Ovary (tissue), 10 donors: ENCODE measurements at regions of chr1 and their contacts with region 1.

Region 1: GRCh38 chr1:22105611-22106207 is 37.2 kb downstream of the WNT4 start:
- DNase-seq: peak in 1 of 5 donors; percentile 56
- H3K4me3 ChIP-seq: no peak overlapping the region
- H3K27ac ChIP-seq: no peak overlapping the region
- H3K4me1 ChIP-seq: peaks cover 15% of the 10 kb centered on the region
- H3K27me3 ChIP-seq: no peaks in the 10 kb centered on the region
- CTCF ChIP-seq: peak; percentile 55 to 92 (median 84)
- EP300 ChIP-seq: no peak
- POLR2A ChIP-seq: no peak

Region 2: GRCh38 chr1:21845646-21846641 is 259.8 kb before region 1 on chr1:
- intact Hi-C with region 1: no loop called
- DNase-seq: no peak
- H3K4me3 ChIP-seq: no peak overlapping the region
- H3K27ac ChIP-seq: no peak overlapping the region
- H3K4me1 ChIP-seq: no peaks in the 10 kb centered on the region
- H3K27me3 ChIP-seq: no peaks in the 10 kb centered on the region
- CTCF ChIP-seq: no peak
- EP300 ChIP-seq: no peak
- POLR2A ChIP-seq: no peak

Region 3: GRCh38 chr1:22089787-22090186 is 15.9 kb before region 1 on chr1:
- intact Hi-C with region 1: no loop called
- DNase-seq: no peak
- H3K4me3 ChIP-seq: no peak overlapping the region
- H3K27ac ChIP-seq: no peak overlapping the region
- H3K4me1 ChIP-seq: peaks cover 8% of the 10 kb centered on the region
- H3K27me3 ChIP-seq: no peaks in the 10 kb centered on the region
- CTCF ChIP-seq: no peak
- EP300 ChIP-seq: no peak
- POLR2A ChIP-seq: no peak

Region 4: DNA sequence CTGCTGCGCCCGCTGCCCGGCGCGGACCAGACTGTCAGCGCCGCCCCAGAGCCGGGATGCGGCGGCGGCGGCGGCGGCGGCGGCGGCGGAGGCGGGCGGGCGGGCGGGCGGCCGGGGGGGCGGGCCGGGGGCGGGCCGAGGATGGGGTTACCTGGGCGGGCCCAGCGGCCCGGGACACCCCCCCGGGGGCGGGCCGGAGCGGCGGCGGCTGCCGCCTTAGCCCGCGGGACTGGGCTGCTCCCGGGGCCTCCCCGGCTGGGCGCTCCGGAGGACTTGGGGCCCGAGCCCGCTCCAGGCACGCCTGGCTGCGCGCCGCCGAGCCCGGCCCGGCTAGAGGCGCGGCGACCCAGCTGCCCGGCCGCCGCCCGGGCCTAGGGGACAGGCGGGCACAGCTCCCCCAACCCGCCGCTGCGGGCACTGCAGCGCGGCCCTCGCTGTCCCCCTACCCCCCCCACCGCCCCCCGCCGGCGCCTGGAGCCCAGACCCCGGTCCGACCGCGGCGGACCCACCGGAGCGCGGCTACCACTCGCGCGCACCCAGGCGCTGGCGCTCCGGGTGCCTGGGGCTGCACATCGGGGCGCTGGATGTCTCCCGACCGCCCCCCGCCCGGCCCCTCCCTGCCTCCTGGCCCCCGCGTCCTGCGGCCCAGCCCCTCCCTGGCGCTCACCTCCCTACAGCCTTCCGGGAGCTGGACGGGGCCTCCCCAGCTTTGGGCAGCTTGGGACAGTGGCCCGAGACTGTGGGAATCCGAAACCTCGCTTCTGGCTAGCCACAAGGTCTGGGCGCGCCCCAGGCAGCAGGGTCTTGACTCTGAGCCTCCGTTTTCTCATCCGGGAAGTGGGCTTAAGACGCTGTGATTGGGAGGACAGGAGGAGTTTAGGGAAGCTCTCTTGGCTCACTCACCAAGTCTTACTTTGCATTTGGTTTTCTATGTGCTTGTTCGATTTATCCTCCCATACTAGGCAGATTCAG is 37.6 kb after region 1 on chr1 and contains the start of gene WNT4:
- intact Hi-C with region 1: loop called in 1 of 4 experiments (anchors 5 kb)
- DNase-seq: peak in 4 of 5 donors; percentile 46 to 74 (median 62)
- H3K4me3 ChIP-seq: peak within 1 kb of the TSS; percentile 41
- H3K27ac ChIP-seq: peak within 1 kb of the TSS; percentile 16 to 24
- H3K4me1 ChIP-seq: peaks cover 3% of the 10 kb centered on the region
- H3K27me3 ChIP-seq: no peaks in the 10 kb centered on the region
- CTCF ChIP-seq: peak in 1 of 3 donors; percentile 36
- EP300 ChIP-seq: no peak
- POLR2A ChIP-seq: no peak
- total RNA-seq, gene WNT4: 3.7 to 125 (median 23.7) TPM

Region 5: GRCh38 chr1:22275721-22276395 is 170.1 kb after region 1 on chr1:
- intact Hi-C with region 1: loop called in 2 of 4 experiments (anchors 5 to 10 kb)
- DNase-seq: peak; percentile 55 to 77 (median 63)
- H3K4me3 ChIP-seq: no peak overlapping the region
- H3K27ac ChIP-seq: no peak overlapping the region
- H3K4me1 ChIP-seq: peaks cover 2% of the 10 kb centered on the region
- H3K27me3 ChIP-seq: no peaks in the 10 kb centered on the region
- CTCF ChIP-seq: peak; percentile 51 to 71 (median 55)
- EP300 ChIP-seq: no peak
- POLR2A ChIP-seq: no peak

Region 6: GRCh38 chr1:22416555-22417454 is 311.1 kb after region 1 on chr1:
- intact Hi-C with region 1: loop called in 3 of 4 experiments (anchors 2 to 10 kb)
- DNase-seq: peak; percentile 70 to 88 (median 80)
- H3K4me3 ChIP-seq: no peak overlapping the region
- H3K27ac ChIP-seq: no peak overlapping the region
- H3K4me1 ChIP-seq: no peaks in the 10 kb centered on the region
- H3K27me3 ChIP-seq: no peaks in the 10 kb centered on the region
- CTCF ChIP-seq: peak; percentile 73 to 94 (median 75)
- EP300 ChIP-seq: no peak
- POLR2A ChIP-seq: no peak

Region 7: DNA sequence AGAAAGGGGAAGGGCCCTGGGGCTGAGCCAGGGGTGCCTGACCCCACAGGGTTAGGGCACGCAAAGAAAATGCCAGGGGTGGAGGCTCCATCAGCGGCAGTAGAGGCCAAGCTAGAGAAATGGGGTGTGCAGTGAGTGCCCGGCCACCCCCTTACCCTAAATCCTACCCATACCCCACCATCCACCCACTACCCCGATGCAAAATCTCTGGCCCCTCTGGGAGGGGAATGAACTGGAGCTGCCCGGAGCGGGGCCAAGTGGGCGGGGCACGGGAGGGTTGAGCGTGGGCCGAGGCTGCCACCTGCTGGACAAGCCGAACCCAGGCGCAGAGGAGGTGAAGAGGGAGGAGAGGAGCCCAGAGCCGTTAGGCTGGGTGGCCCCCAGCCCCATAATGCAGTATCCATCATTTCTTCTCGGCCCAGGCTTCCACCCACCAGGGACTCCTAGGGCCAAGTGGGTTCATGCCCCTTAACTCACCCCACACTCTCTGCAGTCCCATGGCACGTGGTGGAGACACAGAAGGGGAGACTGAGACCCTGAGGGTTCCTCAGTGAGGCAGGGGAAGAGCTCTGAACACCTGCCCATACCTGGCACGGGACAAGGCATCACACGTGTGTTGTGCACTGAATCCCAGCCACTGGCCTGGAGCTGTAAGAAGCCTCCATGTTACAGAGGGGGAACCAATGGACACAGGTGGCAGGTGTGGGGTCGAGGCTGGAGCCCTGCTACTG is 536.4 kb after region 1 on chr1:
- intact Hi-C with region 1: loop called in 2 of 4 experiments (anchors 10 kb)
- DNase-seq: peak; percentile 79 to 92 (median 90)
- H3K4me3 ChIP-seq: no peak overlapping the region
- H3K27ac ChIP-seq: no peak overlapping the region
- H3K4me1 ChIP-seq: peaks cover 3% of the 10 kb centered on the region
- H3K27me3 ChIP-seq: no peaks in the 10 kb centered on the region
- CTCF ChIP-seq: peak; percentile 75 to 82 (median 79)
- EP300 ChIP-seq: no peak
- POLR2A ChIP-seq: no peak